ENCODE measurements at regions of chr14 and their contacts with region 1.

Region 1: GRCh38 chr14:95457043-95457778 is 59.2 kb downstream of the SYNE3 start:
- DNase-seq: peak in 3 of 5 donors; percentile 41 to 75 (median 73)
- ATAC-seq: peak; percentile 40 to 82 (median 66)
- H3K4me3 ChIP-seq: no peak overlapping the region
- H3K27ac ChIP-seq: no peak overlapping the region
- H3K4me1 ChIP-seq: peaks cover 0 to 18% (median 4%) of the 10 kb centered on the region in 12 donors
- H3K27me3 ChIP-seq: no peaks in the 10 kb centered on the region
- CTCF ChIP-seq: no peak
- POLR2A ChIP-seq: no peak

Region 2: DNA sequence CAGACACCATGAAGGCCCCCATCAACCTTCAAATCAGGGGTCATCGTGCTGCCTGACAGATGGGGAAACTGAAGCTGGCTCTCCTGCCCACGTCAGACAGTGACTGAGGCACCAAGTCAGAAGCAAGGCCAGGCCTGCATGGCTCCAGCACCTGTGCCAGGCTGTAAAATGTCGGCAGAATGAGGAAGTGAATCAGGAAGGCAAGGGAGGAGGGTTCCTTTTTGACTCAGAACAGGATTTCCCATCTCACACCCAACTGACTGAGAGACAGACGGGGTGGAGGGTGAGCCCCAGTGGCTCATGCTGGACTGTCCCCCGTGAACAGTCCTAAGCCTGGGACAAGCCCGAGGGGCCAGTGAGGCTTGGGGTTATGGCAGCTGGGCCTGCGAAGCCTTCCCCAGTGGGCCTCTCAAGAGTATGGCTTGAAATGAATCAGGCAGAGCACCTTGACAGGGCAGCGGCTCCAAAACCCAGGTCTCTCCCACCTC is 38.4 kb after region 1 on chr14:
- intact Hi-C with region 1: loop called in 1 of 10 experiments (anchors 5 kb)
- DNase-seq: peak in 1 of 5 donors; percentile 57
- ATAC-seq: peak in 3 of 4 donors; percentile 14 to 53 (median 25)
- H3K4me3 ChIP-seq: no peak overlapping the region
- H3K27ac ChIP-seq: peak overlapping the region in 8 of 12 donors; percentile 16 to 83 (median 36)
- H3K4me1 ChIP-seq: peaks cover 0 to 74% (median 48%) of the 10 kb centered on the region in 12 donors
- H3K27me3 ChIP-seq: no peaks in the 10 kb centered on the region
- CTCF ChIP-seq: no peak
- POLR2A ChIP-seq: no peak

Measured in heart left ventricle (tissue), 16 donors.